H1 (cell line): ENCODE measurements at regions of chr20 and their contacts with region 1.

Region 1: GRCh38 chr20:63309261-63310071 is 16.5 kb downstream of the COL20A1 start:
- DNase-seq: peak in 1 of 2 experiments; percentile 83
- H3K4me3 ChIP-seq: no peak overlapping the region
- H3K27ac ChIP-seq: no peak overlapping the region
- H3K4me1 ChIP-seq: no peaks in the 10 kb centered on the region; a peak in 2 of 7 replicates
- H3K27me3 ChIP-seq: no peaks in the 10 kb centered on the region
- CTCF ChIP-seq: peak; percentile 82 to 93 (median 93)
- EP300 ChIP-seq: no peak
- POLR2A ChIP-seq: no peak
- RAD21 ChIP-seq: peak; percentile 81 to 85

Region 2: GRCh38 chr20:63290677-63291472 is 18.6 kb before region 1 on chr20:
- CTCF ChIA-PET with region 1: interaction called, 61 read pairs
- POLR2A ChIA-PET with region 1: interaction called, 10 read pairs
- DNase-seq: peak; percentile 33 to 98
- H3K4me3 ChIP-seq: no peak overlapping the region
- H3K27ac ChIP-seq: no peak overlapping the region
- H3K4me1 ChIP-seq: peaks cover 0 to 24% (median 17%) of the 10 kb centered on the region in 4 experiments; a peak in 6 of 7 replicates
- H3K27me3 ChIP-seq: peaks cover 0 to 9% (median 0%) of the 10 kb centered on the region in 4 experiments; a peak in 2 of 7 replicates
- CTCF ChIP-seq: peak; percentile 86 to 90 (median 86)
- EP300 ChIP-seq: no peak
- POLR2A ChIP-seq: no peak
- RAD21 ChIP-seq: peak; percentile 61 to 72

Region 3: DNA sequence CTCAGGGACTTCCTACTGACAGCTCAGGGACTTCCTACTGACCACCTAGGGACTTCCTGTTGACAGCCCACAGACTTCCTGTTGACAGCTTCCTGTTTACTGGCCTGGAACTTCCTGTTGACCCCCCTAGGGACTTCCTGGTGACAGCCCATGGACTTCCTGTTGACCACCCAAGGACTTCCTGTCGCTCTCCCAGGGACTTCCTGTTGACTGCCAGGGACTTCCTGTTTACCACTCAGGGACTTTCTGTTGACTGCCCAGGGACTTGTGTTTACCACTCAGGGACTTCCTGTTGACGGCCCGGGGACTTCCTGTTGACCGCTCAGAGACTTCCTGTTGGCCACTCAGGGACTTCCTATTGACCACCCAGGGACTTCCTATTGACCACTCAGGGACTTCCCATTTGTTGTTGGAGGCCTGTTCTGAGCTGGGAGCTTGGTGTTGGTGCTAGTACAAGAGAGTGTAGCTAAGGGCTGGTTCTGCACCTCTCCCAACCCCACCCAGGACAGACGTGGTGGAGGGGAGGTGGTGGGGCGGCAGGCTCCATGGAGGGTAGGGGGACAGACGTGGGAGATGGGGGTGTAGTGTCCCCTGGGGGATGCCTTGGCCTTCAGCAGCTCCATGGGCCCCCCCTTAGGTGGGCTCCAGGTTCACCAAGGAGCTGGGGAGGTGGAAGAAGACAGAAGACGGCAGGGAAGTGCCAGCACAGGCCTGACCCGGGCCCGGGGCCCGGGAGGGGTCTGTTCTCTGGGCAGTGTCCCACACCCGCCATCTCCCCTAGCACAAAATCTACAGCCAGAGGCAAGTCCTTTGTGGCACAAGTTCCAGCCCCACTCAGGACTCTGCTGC is 17.7 kb after region 1 on chr20:
- CTCF ChIA-PET with region 1: interaction called, 45 read pairs
- POLR2A ChIA-PET with region 1: no interaction called
- DNase-seq: no peak
- H3K4me3 ChIP-seq: no peak overlapping the region
- H3K27ac ChIP-seq: no peak overlapping the region
- H3K4me1 ChIP-seq: peaks cover 0 to 5% (median 1%) of the 10 kb centered on the region in 4 experiments; a peak in 3 of 7 replicates
- H3K27me3 ChIP-seq: no peaks in the 10 kb centered on the region
- CTCF ChIP-seq: no peak
- EP300 ChIP-seq: no peak
- POLR2A ChIP-seq: no peak
- RAD21 ChIP-seq: no peak

Region 4: GRCh38 chr20:63360850-63361518 is 51.5 kb after region 1 on chr20 and contains the start of gene CHRNA4:
- CTCF ChIA-PET with region 1: interaction called, 17 read pairs
- POLR2A ChIA-PET with region 1: no interaction called
- DNase-seq: peak in 1 of 2 experiments; percentile 79
- H3K4me3 ChIP-seq: peak within 1 kb of the TSS; percentile 50 to 73 (median 52)
- H3K27ac ChIP-seq: no peak within 1 kb of the TSS
- H3K4me1 ChIP-seq: peaks cover 0 to 21% (median 15%) of the 10 kb centered on the region in 4 experiments; a peak in 6 of 7 replicates
- H3K27me3 ChIP-seq: peaks cover 0 to 29% (median 18%) of the 10 kb centered on the region in 4 experiments; a peak in 6 of 7 replicates
- CTCF ChIP-seq: no peak
- EP300 ChIP-seq: no peak
- POLR2A ChIP-seq: no peak
- RAD21 ChIP-seq: no peak
- total RNA-seq, gene CHRNA4: 2.7 and 5.7 TPM in 2 replicates

Region 5: GRCh38 chr20:63394069-63394919 is 84.8 kb after region 1 on chr20:
- CTCF ChIA-PET with region 1: interaction called, 11 read pairs
- POLR2A ChIA-PET with region 1: interaction called, 3 read pairs
- DNase-seq: peak in 1 of 2 experiments; percentile 41
- H3K4me3 ChIP-seq: peak overlapping the region in 1 of 4 experiments; percentile 12; a peak in 3 of 8 replicates
- H3K27ac ChIP-seq: no peak overlapping the region
- H3K4me1 ChIP-seq: peaks cover 0 to 19% (median 18%) of the 10 kb centered on the region in 4 experiments; a peak in 6 of 7 replicates
- H3K27me3 ChIP-seq: peaks cover 0 to 3% (median 0%) of the 10 kb centered on the region in 4 experiments; a peak in 1 of 7 replicates
- CTCF ChIP-seq: no peak
- EP300 ChIP-seq: no peak
- POLR2A ChIP-seq: no peak
- RAD21 ChIP-seq: no peak

Region 6: GRCh38 chr20:63627129-63627750 is 317.8 kb after region 1 on chr20:
- CTCF ChIA-PET with region 1: no interaction called
- POLR2A ChIA-PET with region 1: no interaction called
- DNase-seq: peak; percentile 54 to 95
- H3K4me3 ChIP-seq: peak overlapping the region; percentile 75 to 99 (median 92)
- H3K27ac ChIP-seq: peak overlapping the region; percentile 68; the same call in 1 of the 2 replicates
- H3K4me1 ChIP-seq: peaks cover 0 to 3% (median under 1%) of the 10 kb centered on the region in 4 experiments; a peak in 3 of 7 replicates
- H3K27me3 ChIP-seq: no peaks in the 10 kb centered on the region
- CTCF ChIP-seq: no peak
- EP300 ChIP-seq: no peak
- POLR2A ChIP-seq: no peak
- RAD21 ChIP-seq: no peak